T-cell (primary cell): ENCODE measurements at regions of chr17 and their contacts with region 1.

Region 1: GRCh38 chr17:79832211-79833109 is 6.8 kb downstream of the CBX4 start:
- DNase-seq: peak in 1 of 35 experiments; percentile 29
- ATAC-seq: peak in 2 of 4 experiments; percentile 5 to 8
- H3K4me3 ChIP-seq: no peak overlapping the region
- H3K4me3 Mint-ChIP-seq: peak overlapping the region in 1 of 3 donors; percentile 65
- H3K27ac ChIP-seq: no peak overlapping the region
- H3K27ac Mint-ChIP-seq: no peak overlapping the region
- H3K4me1 ChIP-seq: peaks cover 18 to 62% of the 10 kb centered on the region in 2 experiments
- H3K4me1 Mint-ChIP-seq: peaks cover 22 to 49% (median 27%) of the 10 kb centered on the region in 3 donors
- H3K27me3 ChIP-seq: no peaks in the 10 kb centered on the region
- H3K27me3 Mint-ChIP-seq: no peaks in the 10 kb centered on the region

Region 2: GRCh38 chr17:80008383-80008840 is 176.0 kb after region 1 on chr17:
- CTCF ChIA-PET with region 1: interaction called in 1 of 2 experiments, 14 read pairs
- POLR2A ChIA-PET with region 1: no interaction called
- DNase-seq: peak; percentile 24 to 81 (median 61)
- ATAC-seq: peak; percentile 78 to 87 (median 82)
- H3K4me3 ChIP-seq: no peak overlapping the region
- H3K4me3 Mint-ChIP-seq: no peak overlapping the region
- H3K27ac ChIP-seq: no peak overlapping the region
- H3K27ac Mint-ChIP-seq: no peak overlapping the region
- H3K4me1 ChIP-seq: peaks cover 0 to 18% of the 10 kb centered on the region in 2 experiments
- H3K4me1 Mint-ChIP-seq: peaks cover 10 to 12% (median 10%) of the 10 kb centered on the region in 3 donors
- H3K27me3 ChIP-seq: peaks cover 0 to 12% of the 10 kb centered on the region in 2 experiments
- H3K27me3 Mint-ChIP-seq: no peaks in the 10 kb centered on the region

Region 3: DNA sequence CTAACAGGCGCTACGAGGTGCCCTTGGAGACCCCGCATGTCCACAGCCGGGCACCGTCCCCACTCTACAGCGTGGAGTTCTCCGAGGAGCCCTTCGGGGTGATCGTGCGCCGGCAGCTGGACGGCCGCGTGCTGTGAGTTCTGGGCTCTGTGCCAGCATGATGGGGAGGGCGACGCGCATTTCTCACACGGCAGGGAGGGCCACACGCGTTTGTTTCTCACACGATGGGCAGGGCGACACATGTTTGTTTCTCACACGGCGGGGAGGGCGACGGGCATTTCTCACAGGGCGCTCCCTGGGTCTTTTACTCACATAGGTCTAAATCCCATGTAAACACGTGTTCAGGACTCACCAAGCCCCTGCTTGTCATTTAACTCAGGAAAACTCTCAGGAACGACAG is 273.3 kb after region 1 on chr17:
- CTCF ChIA-PET with region 1: no interaction called
- POLR2A ChIA-PET with region 1: no interaction called
- DNase-seq: no peak
- ATAC-seq: no peak
- H3K4me3 ChIP-seq: no peak overlapping the region
- H3K4me3 Mint-ChIP-seq: no peak overlapping the region
- H3K27ac ChIP-seq: no peak overlapping the region
- H3K27ac Mint-ChIP-seq: no peak overlapping the region
- H3K4me1 ChIP-seq: peaks cover 0 to 18% of the 10 kb centered on the region in 2 experiments
- H3K4me1 Mint-ChIP-seq: peaks cover 14 to 23% (median 19%) of the 10 kb centered on the region in 3 donors
- H3K27me3 ChIP-seq: no peaks in the 10 kb centered on the region
- H3K27me3 Mint-ChIP-seq: no peaks in the 10 kb centered on the region